ENCODE measurements at regions of chr7 and their contacts with region 1.

Region 1: GRCh38 chr7:992709-993607 is 10.0 kb downstream of the CYP2W1 start:
- DNase-seq: peak; percentile 97
- H3K4me3 Mint-ChIP-seq: no peak overlapping the region
- H3K27ac Mint-ChIP-seq: peak overlapping the region; percentile 19
- H3K4me1 Mint-ChIP-seq: no peaks in the 10 kb centered on the region
- H3K27me3 Mint-ChIP-seq: peaks cover 7% of the 10 kb centered on the region

Region 2: DNA sequence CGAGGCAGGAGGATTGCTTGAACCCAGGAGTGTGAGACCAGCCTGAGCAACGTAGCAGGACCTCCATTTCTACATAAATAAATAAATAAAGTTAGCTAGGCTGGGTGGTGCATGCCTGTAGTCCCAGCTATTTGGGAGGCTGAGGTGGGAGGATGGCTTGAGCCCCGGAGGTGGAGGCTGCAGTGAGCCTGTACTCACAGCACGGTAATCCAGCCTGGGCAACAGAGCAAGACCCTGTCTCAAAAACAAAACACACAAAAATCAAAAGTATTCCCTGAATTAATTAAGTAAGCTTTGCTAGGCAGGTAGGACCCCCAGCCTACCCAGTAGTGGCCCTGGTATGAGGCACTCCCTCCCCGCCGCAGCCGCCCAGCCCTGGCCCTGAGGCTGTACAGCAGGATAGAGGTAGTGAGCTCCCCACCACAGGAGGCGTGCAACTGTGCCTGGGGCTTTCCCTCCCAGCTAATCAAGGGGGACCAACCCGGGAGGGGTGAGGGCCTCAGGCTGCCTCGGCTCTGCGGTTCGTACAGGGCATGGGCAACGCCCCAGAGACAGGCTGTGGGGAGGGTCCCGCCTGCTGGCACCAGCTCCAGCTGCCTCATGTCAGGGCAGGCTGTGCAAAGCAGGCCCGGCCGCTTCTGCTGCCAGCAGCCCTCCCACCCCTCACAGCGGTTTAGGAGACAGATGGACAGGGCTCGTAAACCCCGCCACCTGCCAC is 11.0 kb before region 1 on chr7:
- CTCF ChIA-PET with region 1: interaction called, 51 read pairs
- DNase-seq: no peak
- H3K4me3 Mint-ChIP-seq: no peak overlapping the region
- H3K27ac Mint-ChIP-seq: no peak overlapping the region
- H3K4me1 Mint-ChIP-seq: no peaks in the 10 kb centered on the region
- H3K27me3 Mint-ChIP-seq: peaks cover 14% of the 10 kb centered on the region

Region 3: DNA sequence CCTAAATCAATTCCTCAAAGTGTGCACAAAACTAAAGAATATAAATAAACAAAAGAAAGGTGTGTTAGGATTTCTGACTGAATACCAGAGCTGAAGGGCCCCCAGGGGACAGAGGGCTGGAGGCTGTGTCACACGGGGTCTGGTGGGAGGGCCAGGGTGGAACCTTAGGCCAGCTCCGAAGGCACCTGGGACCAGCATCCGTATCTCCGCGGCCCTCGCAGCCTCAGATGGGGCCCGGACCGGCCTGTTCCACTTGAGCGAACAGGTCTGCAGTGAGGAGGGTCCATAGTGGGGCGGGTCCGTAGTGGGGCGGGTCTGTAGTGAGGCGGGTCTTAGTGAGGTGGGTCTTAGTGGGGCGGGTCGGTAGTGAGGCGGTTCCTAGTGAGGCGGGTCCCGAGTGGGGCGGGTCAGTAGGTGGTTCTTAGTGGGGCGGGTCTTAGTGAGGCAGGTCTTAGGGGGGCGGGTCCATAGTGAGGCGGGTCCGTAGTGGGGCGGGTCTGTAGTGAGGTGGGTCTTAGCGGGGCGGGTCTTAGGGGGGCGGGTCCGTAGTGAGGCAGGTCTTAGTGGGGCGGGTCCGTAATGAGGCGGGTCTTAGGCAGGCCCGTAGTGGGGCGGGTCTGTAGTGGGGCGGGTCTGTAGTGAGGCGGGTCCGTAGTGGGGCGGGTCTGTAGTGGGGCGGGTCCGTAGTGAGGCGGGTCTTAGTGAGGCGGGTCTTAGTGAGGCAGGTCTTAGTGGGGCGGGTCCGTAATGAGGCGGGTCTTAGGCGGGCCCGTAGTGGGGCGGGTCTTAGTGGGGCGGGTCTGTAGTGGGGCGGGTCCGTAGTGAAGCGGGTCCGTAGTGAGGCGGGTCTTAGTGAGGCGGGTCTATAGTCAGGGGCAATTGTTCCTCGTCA is 66.5 kb after region 1 on chr7:
- CTCF ChIA-PET with region 1: interaction called, 247 read pairs
- DNase-seq: no peak
- H3K4me3 Mint-ChIP-seq: no peak overlapping the region
- H3K27ac Mint-ChIP-seq: peak overlapping the region; percentile 58
- H3K4me1 Mint-ChIP-seq: peaks cover 33% of the 10 kb centered on the region
- H3K27me3 Mint-ChIP-seq: peaks cover 25% of the 10 kb centered on the region

Region 4: DNA sequence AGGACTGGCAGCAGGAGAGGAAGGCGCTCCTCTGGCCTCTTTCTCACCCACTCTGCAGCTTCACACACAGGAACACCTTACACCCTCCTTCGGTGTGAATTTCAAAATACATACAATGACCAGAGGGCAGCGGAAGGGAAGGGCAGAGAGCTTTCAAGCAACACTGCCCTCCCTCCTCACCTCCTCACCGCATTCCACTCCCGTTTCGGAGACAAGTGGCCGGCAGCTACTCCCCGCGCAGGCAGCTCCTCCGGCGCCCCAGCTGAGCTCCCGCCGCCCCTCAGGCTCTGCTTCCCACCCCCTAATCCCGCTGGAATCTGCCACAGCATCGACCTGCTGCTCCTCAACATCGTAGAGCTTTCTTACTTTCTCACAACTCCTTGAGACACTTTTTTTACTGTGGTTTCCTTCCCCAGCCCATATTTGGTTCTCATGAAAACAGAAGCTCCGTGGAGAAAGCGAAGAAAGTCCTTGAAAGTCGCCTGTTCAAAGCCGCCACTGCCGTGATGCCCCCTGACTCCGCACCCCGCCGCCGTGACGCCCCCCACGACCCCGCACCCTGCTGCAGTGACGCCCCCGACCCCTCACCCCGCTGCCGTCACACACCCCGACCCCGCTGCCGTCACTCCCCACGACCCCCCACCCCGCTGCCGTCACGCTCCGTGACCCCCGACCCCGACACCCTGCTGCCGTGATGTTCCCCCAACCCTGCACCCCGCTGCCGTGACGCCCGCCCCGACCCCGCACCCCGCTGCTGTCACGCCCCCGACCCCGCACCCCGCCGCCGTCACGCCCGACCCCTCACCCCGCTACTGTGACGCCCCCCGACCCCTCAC is 80.4 kb after region 1 on chr7:
- CTCF ChIA-PET with region 1: interaction called, 13 read pairs
- DNase-seq: no peak
- H3K4me3 Mint-ChIP-seq: no peak overlapping the region
- H3K27ac Mint-ChIP-seq: no peak overlapping the region
- H3K4me1 Mint-ChIP-seq: no peaks in the 10 kb centered on the region
- H3K27me3 Mint-ChIP-seq: no peaks in the 10 kb centered on the region

Region 5: DNA sequence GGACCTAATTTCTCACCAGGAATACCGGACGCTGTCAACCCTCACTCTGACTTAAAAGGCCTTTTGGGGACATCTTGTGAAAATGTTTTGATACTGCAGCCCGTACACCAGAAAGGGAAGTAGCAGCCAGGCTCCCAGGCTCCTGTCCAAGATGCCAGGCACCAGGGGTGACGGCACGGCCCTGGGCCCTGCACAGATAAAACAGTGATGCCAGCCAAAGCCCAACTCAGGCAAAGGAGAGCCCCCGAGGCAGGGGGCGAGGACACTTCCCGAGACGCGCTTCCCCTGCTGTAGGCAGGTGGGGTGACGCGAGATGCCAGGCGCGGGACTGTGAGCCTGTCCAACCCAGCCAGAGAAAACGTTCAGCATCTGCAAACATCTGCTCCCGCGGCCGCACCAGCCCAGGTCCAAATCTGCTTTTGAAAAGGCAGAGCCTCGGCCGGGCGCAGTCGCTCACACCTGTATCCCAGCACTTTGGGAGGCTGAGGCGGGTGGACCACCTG is 151.4 kb after region 1 on chr7:
- CTCF ChIA-PET with region 1: interaction called, 19 read pairs
- DNase-seq: no peak
- H3K4me3 Mint-ChIP-seq: no peak overlapping the region
- H3K27ac Mint-ChIP-seq: no peak overlapping the region
- H3K4me1 Mint-ChIP-seq: no peaks in the 10 kb centered on the region
- H3K27me3 Mint-ChIP-seq: peaks cover 10% of the 10 kb centered on the region

Region 6: GRCh38 chr7:1169409-1170368 is 176.7 kb after region 1 on chr7:
- CTCF ChIA-PET with region 1: interaction called, 44 read pairs
- DNase-seq: peak; percentile 97
- H3K4me3 Mint-ChIP-seq: peak overlapping the region; percentile 82
- H3K27ac Mint-ChIP-seq: peak overlapping the region; percentile 94
- H3K4me1 Mint-ChIP-seq: peaks cover 21% of the 10 kb centered on the region
- H3K27me3 Mint-ChIP-seq: peaks cover under 1% of the 10 kb centered on the region

Region 7: GRCh38 chr7:1473864-1474512 is 481.0 kb after region 1 on chr7:
- CTCF ChIA-PET with region 1: no interaction called
- DNase-seq: peak; percentile 93
- H3K4me3 Mint-ChIP-seq: no peak overlapping the region
- H3K27ac Mint-ChIP-seq: no peak overlapping the region
- H3K4me1 Mint-ChIP-seq: peaks cover 14% of the 10 kb centered on the region
- H3K27me3 Mint-ChIP-seq: no peaks in the 10 kb centered on the region